CD8-positive, alpha-beta T cell (primary cell): ENCODE measurements at regions of chr1 and their contacts with region 1.

Region 1: GRCh38 chr1:153908071-153908470 is 14.7 kb downstream of the GATAD2B start:
- DNase-seq: no peak
- ATAC-seq: no peak
- H3K4me3 ChIP-seq: no peak overlapping the region
- H3K4me3 Mint-ChIP-seq: no peak overlapping the region
- H3K27ac ChIP-seq: no peak overlapping the region
- H3K27ac Mint-ChIP-seq: no peak overlapping the region
- H3K4me1 ChIP-seq: peaks cover 9% of the 10 kb centered on the region
- H3K4me1 Mint-ChIP-seq: peaks cover 48% of the 10 kb centered on the region
- H3K27me3 ChIP-seq: no peaks in the 10 kb centered on the region
- H3K27me3 Mint-ChIP-seq: no peaks in the 10 kb centered on the region
- CTCF ChIP-seq: no peak

Region 2: DNA sequence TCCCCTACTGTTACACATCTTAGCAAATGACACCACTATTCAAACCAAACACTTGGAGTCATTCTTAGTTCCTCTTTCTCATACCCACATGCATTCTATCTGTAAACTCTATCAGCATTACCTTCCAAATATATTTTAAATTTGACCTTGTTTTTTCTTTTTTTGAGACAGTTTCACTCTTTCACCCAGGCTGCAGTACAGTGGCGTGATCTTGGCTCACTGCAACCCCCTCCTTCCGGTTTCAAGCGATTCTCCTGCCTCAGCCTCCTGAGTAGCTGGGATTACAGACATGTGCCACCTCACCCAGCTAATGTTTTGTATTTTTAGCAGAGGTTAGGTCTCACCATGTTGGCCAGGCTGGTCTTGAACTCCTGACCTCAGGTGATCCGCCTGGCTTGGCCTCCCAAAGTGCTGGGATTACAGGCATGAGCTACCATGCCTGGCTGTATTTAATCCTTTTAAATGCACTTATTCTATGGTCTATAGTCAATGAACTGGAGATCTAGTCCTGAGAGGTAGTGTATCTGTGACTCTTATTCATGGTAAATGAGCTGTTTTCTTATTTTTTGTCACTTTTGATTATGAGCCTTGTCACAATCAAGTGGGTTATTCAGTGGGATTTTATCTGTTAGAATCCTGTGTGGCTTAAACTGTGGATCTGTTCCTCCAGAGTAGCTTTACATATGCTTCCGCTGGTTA is 58.4 kb before region 1 on chr1:
- CTCF ChIA-PET with region 1: no interaction called
- POLR2A ChIA-PET with region 1: interaction called, 3 read pairs
- intact Hi-C with region 1: loop called in 1 of 2 experiments (anchors 5 kb)
- DNase-seq: peak in 3 of 9 experiments; percentile 7 to 31 (median 20)
- ATAC-seq: no peak
- H3K4me3 ChIP-seq: no peak overlapping the region
- H3K4me3 Mint-ChIP-seq: no peak overlapping the region
- H3K27ac ChIP-seq: no peak overlapping the region
- H3K27ac Mint-ChIP-seq: peak overlapping the region; percentile 60
- H3K4me1 ChIP-seq: peaks cover 14% of the 10 kb centered on the region
- H3K4me1 Mint-ChIP-seq: peaks cover 47% of the 10 kb centered on the region
- H3K27me3 ChIP-seq: no peaks in the 10 kb centered on the region
- H3K27me3 Mint-ChIP-seq: no peaks in the 10 kb centered on the region
- CTCF ChIP-seq: no peak